ENCODE measurements at regions of chr3 and their contacts with region 1.

Region 1: GRCh38 chr3:14178247-14179113 is at the starts of genes LSM3 and XPC:
- DNase-seq: peak; percentile 97
- H3K4me3 Mint-ChIP-seq: peak within 1 kb of the TSS; percentile 89
- H3K27ac Mint-ChIP-seq: peak within 1 kb of the TSS; percentile 99
- H3K4me1 Mint-ChIP-seq: peaks cover 55% of the 10 kb centered on the region
- H3K27me3 Mint-ChIP-seq: no peaks in the 10 kb centered on the region
- total RNA-seq, gene LSM3: 15.1 and 18.3 TPM in 2 replicates
- total RNA-seq, gene XPC: 31.4 and 33.2 TPM in 2 replicates

Region 2: GRCh38 chr3:13419505-13420044 is 758.9 kb before region 1 on chr3:
- intact Hi-C with region 1: loop called (anchors 10 kb)
- DNase-seq: peak; percentile 54
- H3K4me3 Mint-ChIP-seq: peak overlapping the region; percentile 86
- H3K27ac Mint-ChIP-seq: peak overlapping the region; percentile 89
- H3K4me1 Mint-ChIP-seq: peaks cover 64% of the 10 kb centered on the region
- H3K27me3 Mint-ChIP-seq: no peaks in the 10 kb centered on the region

Region 3: DNA sequence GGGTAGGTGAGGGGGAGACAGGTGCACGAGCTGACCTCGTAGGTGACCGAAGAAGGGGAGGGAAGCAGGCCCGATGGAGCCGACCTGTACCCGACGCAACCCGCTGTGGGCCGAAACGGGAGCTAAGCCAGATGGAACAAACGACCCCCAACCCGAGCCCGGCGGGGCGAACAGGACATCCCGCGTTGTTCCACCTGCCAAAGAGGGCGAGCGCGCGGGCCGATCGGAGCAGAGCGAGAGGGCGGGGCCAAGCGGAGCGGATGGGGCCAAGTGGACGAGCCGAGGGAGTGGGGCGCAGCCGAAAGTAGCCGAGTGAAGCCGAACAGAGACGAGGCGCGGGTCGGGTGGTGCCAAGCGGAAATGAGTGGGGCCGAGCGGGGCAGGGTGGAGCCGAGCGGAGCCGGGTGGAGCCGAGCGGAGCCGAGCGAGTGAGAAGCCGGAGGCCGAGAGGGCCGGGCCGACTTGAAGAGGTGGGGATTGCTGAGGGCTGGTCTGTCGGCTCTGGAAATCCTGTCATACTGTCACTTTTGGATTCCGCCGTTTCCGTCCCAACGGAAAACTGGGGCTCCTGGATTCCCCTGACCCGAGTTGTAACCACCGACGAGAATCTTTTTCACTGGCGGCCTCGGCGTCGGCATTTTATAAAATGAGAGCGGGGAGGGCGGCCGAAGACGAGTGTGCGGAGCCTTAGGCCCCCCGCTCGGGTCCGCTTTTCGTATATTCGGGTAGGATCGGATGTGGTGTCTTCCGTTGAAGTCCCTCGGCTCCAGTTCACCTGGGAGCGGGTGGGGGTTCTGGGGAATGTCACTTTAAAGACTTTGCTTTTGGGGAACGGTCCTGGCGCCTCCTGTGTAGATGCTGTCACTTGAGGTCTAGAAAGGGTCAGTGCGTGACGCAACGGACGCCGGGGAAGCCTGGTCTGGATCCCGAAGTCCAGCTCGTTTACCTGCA is 283.1 kb before region 1 on chr3:
- intact Hi-C with region 1: loop called (anchors 1 kb)
- DNase-seq: peak; percentile 95
- H3K4me3 Mint-ChIP-seq: peak overlapping the region; percentile 87
- H3K27ac Mint-ChIP-seq: peak overlapping the region; percentile 71
- H3K4me1 Mint-ChIP-seq: peaks cover 21% of the 10 kb centered on the region
- H3K27me3 Mint-ChIP-seq: peaks cover 3% of the 10 kb centered on the region

Region 4: DNA sequence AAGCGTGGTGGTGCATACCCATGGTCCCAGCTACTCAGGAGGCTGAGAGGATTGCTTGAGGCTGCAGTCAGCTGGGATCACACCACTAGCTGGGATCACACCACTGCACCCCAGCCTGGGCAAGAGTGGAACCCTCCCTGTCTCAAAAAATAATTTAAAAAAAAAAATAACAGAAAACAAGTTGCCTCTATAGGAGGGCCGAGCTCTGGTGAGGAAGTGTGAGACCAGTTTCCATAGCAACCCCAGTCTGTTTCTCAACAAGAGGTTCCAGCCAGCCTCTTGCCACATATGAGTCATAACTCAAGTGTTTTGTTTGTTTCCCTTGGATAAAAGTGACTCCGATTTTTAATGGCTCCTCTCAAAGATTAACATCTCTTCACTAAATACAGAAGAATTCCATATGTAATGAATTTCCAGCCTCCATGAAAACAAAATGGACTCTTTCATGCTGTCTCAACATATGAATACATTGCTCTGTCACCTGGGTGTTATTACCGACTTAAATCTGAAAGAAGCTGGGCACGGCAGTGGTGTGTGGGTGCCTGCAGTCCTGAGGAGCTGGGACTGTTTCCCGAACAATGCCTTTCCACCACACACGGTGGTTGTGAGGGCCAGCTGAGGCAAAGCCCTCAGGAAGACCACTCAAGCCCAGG is 33.9 kb before region 1 on chr3:
- intact Hi-C with region 1: loop called (anchors 1 kb)
- DNase-seq: peak; percentile 73
- H3K4me3 Mint-ChIP-seq: peak overlapping the region; percentile 15
- H3K27ac Mint-ChIP-seq: peak overlapping the region; percentile 85
- H3K4me1 Mint-ChIP-seq: peaks cover 29% of the 10 kb centered on the region
- H3K27me3 Mint-ChIP-seq: no peaks in the 10 kb centered on the region

Region 5: DNA sequence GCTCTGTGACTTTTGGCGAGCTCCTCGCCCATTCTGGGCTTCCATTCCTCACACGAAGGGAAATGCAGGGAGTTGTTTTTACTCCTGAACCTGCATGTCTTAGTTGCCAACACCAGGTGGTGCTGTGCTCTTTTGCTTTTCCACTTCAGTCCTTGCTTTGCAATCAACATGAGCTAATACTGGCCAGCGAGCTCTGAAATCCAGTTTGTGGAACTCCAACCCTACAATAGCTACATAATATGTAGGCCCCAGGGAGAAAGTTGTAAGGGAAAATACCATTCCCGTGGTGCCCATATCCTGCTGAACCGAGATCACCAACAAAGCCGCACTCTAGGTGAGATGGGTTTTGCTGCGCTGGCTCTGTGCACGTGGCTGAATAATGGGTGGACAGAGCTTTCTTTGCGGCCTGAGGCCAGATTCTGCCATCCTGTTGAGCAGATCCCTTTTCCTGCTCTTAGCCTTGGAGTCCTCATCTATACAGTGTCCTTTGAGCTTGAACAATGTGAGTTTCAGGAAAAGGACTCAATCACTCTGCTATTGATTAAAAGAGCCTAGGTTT is 25.1 kb after region 1 on chr3:
- intact Hi-C with region 1: no loop called
- DNase-seq: peak; percentile 18
- H3K4me3 Mint-ChIP-seq: no peak overlapping the region
- H3K27ac Mint-ChIP-seq: no peak overlapping the region
- H3K4me1 Mint-ChIP-seq: no peaks in the 10 kb centered on the region
- H3K27me3 Mint-ChIP-seq: no peaks in the 10 kb centered on the region

Region 6: DNA sequence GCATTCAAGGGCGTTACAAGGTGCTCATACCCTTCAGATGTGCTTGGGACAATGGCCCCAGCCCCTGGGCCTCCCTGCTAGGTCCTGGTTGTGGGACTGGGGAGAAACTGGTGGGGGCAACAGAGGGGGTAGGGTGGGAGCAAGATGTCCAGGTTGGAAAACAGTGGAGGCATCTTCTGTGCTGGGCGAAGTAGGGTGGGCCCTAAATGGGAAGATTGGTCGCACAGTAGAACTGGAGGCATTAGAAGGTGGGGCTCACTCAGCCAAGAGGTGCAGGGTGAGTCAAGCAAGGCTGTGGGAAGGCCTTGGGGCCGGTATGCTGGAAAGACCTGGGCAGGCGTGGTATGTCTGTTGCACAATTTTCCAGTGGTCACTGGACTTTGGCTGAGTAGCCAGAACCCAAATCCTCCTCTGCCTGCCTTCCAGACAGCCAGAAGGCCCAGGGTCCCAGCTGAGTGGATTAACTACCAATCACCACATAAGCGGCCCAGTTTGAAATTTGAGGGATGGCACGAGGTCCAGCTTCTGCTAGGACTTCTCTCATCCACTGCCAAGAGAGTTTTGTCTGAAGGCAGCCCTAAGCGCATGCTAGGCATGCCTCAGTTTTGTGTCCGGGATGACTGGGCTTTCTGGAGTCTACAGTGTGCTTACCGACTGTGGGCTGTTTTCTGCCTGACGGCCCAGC is 74.7 kb after region 1 on chr3:
- intact Hi-C with region 1: no loop called
- DNase-seq: no peak
- H3K4me3 Mint-ChIP-seq: no peak overlapping the region
- H3K27ac Mint-ChIP-seq: no peak overlapping the region
- H3K4me1 Mint-ChIP-seq: no peaks in the 10 kb centered on the region
- H3K27me3 Mint-ChIP-seq: no peaks in the 10 kb centered on the region

Region 7: GRCh38 chr3:14431892-14432834 is 253.7 kb after region 1 on chr3:
- intact Hi-C with region 1: loop called (anchors 1 kb)
- DNase-seq: peak; percentile 91
- H3K4me3 Mint-ChIP-seq: peak overlapping the region; percentile 73
- H3K27ac Mint-ChIP-seq: peak overlapping the region; percentile 93
- H3K4me1 Mint-ChIP-seq: peaks cover 72% of the 10 kb centered on the region
- H3K27me3 Mint-ChIP-seq: no peaks in the 10 kb centered on the region

Region 8: DNA sequence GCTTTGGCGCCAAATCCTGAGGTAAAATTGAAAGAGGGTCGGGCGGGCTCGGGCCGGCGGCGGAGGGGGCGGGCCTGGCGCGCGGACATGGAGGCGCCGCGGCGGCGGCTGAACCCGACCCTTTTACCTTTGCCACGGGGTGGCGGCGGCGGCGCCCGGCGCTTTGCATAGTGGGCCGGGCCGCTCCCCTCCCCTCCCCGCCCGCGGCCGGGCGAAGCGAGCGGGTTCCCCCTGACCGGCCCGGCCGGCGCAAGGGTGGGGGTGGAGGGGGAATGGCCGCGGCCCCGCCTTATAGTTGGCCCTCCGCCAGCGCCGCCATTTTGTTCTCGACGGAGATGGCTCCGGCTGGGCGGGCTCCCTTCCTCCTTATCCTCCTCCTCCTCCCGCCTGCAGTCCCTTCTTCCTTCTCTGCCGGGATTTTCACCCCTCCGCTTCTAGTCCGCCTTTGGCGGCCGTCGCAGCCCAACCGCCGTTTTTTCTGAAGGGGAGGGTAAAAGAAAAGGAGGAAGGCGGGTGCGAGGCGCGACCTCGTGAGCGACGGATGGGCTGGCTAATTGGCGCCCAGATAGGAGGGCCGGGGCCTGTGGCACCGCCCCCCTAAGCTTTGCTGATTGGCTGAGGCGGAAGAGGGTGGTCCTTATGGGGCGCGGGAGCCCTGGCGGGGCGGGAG is 769.5 kb after region 1 on chr3:
- intact Hi-C with region 1: loop called (anchors 1 kb)
- DNase-seq: peak; percentile 94
- H3K4me3 Mint-ChIP-seq: peak overlapping the region; percentile 99
- H3K27ac Mint-ChIP-seq: peak overlapping the region; percentile 100
- H3K4me1 Mint-ChIP-seq: peaks cover 36% of the 10 kb centered on the region
- H3K27me3 Mint-ChIP-seq: no peaks in the 10 kb centered on the region

Measured in activated T-helper 2 cell treated with anti-CD3 and anti-CD28 coated beads, Interferon-gamma antibody, Interleukin-2, Interleukin-4, amounts not matched to agents 10 μg/mL and 5 μg/mL and 100 μg/mL, durations not matched to agents 14 hours and 24 hours and 36 hours (primary cell).